Aorta (tissue), 5 donors: ENCODE measurements at regions of chr15 and their contacts with region 1.

Region 1: DNA sequence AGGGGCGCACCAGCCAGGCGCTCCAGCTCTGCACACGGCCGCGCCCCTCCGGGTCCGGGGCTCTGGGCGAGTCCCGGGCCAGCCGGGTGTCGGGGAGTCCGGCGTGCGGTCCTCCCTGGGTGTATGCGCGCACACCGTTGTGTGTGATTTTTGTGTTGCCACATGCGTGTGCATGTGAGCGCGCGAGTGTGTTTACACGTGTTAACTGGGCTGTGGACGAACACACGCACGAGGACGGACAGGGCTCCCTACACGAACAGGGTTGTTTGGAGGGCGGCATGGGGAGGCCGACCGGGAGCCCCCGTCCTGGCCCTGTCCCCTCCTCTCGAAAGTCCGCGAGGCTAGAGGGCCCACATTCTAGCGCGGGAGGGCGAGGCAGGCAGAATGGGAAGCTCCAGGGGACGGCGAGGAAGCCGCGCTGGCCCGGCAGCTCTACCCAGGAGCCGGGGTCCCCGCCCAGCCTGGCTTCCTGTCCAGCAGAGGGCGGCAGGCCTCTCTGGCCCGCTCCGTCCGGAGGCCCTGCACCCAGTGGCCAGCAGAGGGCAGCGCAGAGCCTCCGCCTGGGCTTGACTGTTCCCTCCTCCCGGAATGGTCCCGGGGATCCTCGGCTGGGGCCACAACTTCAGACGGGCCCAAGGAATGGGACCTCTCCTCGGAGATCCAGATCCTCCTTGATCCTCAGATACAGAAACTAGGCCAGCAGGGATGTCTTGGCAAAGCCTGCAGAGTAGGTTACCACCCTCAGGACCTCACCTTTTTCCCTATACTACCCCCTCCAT is 611 bp upstream of the LINGO1 start:
- DNase-seq: peak; percentile 92 to 96
- ATAC-seq: peak; percentile 96
- H3K4me3 ChIP-seq: peak overlapping the region; percentile 19 to 57
- H3K27ac ChIP-seq: no peak overlapping the region
- H3K4me1 ChIP-seq: no peaks in the 10 kb centered on the region
- H3K27me3 ChIP-seq: no peaks in the 10 kb centered on the region

Region 2: GRCh38 chr15:77107531-77108355 is 525.6 kb before region 1 on chr15:
- intact Hi-C with region 1: loop called in 1 of 2 experiments (anchors 10 kb)
- DNase-seq: peak in 1 of 2 donors; percentile 61
- ATAC-seq: peak; percentile 70
- H3K4me3 ChIP-seq: no peak overlapping the region
- H3K27ac ChIP-seq: no peak overlapping the region
- H3K4me1 ChIP-seq: no peaks in the 10 kb centered on the region
- H3K27me3 ChIP-seq: no peaks in the 10 kb centered on the region

Region 3: DNA sequence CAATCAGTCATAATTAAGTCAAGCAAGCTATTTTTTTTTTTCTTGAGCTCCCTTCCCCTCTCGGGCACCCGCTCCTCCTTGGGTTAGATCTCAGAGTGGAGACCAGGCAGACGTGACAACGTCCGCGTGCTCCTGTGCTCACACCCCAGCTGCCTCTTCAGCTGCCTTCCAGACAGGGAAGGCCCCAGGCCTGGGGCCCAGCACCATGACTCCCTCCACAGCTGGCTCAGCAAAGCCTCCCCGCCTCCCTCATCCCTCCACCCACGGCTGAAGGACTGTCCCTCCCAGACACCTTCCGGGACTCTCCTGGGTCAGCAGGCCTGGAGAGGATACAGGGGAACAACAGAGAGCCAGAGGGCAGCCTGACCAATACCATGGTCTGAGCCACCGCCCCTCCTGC is 87.3 kb after region 1 on chr15:
- intact Hi-C with region 1: no loop called
- DNase-seq: no peak
- ATAC-seq: no peak
- H3K4me3 ChIP-seq: no peak overlapping the region
- H3K27ac ChIP-seq: no peak overlapping the region
- H3K4me1 ChIP-seq: no peaks in the 10 kb centered on the region
- H3K27me3 ChIP-seq: no peaks in the 10 kb centered on the region

Region 4: DNA sequence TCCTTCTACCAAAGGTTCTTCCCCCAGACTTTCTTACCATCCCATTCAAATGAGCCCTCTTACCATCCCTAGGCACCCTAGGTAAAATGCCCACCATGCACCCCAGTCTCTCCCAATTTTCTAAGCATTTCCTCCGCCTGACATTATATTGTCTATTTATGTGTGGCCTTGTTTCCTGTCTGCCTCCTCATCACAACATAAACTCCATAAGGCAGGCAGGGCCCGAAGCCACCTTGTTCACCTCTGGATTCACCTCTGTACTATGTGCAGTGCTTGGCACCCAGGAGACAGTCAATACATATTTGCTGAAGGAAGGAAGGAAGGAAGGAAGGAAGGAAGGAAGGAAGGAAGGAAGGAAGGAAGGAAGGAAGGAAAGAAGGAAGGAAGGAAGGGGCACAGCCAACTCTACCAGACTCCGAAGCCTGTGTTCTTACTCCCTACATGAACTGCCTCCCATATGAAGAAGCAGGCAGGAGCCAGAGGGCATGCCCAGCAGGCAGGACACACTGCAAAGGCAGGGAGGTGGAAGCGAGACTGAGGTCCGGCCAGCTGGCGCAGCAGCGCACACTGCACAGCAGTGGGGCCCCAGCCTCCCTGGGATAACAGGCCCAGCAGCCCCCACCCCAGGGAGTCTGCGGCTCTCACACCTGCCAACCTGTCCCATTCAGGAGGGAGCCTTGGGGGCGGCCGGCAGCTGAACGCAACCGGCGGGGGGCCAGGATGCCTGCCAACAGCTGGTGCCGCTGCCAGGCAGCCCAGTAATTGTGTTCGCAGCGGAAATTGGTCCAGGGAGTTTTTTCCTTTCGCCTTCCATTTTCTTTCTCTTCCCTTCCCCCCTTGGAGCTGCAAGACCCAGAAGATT is 105.3 kb after region 1 on chr15:
- intact Hi-C with region 1: no loop called
- DNase-seq: no peak
- ATAC-seq: no peak
- H3K4me3 ChIP-seq: no peak overlapping the region
- H3K27ac ChIP-seq: no peak overlapping the region
- H3K4me1 ChIP-seq: no peaks in the 10 kb centered on the region
- H3K27me3 ChIP-seq: no peaks in the 10 kb centered on the region

Region 5: DNA sequence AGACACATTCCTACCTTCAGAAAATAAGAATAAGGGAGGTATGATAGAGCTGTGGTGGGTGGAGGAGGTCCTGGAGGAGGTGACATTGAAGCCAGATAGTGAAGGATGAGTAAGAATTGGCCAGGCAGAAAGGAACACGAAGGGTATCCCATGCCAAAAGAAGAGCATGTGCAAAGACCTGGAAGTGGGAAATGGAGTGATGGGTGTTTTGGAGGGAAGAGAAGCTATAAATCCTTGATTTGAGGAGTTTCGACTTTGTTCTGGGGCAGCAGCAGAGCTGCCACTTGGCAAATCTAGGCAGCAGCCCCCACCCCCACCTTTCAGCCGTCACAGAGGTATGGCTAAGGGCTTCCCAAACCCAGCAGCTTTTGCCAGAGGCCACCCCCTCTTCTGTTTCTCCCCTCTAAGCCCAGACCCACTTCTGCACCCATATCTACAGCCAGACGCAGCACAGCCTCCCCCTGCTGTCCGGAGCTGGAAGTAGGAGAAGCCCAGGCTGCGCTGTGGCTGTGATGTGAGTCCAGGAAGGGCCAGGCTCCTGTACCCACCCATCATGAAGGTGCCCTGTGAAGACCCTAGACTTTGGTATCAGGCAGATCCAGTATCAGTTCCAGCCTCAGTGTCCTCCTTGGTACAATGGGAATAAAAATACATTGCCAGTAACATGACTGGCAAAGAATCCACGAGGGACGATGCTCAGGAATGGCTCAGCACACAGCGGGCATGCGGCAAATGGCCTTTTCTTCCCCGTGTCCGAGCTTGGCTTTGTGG is 188.1 kb after region 1 on chr15:
- intact Hi-C with region 1: loop called (anchors 10 kb)
- DNase-seq: peak in 1 of 2 donors; percentile 59
- ATAC-seq: peak; percentile 66
- H3K4me3 ChIP-seq: no peak overlapping the region
- H3K27ac ChIP-seq: no peak overlapping the region
- H3K4me1 ChIP-seq: no peaks in the 10 kb centered on the region
- H3K27me3 ChIP-seq: no peaks in the 10 kb centered on the region

Region 6: GRCh38 chr15:77870195-77871065 is 237.1 kb after region 1 on chr15:
- intact Hi-C with region 1: loop called in 1 of 2 experiments (anchors 5 kb)
- DNase-seq: peak; percentile 69 to 87
- ATAC-seq: peak; percentile 71
- H3K4me3 ChIP-seq: no peak overlapping the region
- H3K27ac ChIP-seq: no peak overlapping the region
- H3K4me1 ChIP-seq: no peaks in the 10 kb centered on the region
- H3K27me3 ChIP-seq: no peaks in the 10 kb centered on the region